ENCODE measurements at regions of chr6 and their contacts with region 1.

Region 1: DNA sequence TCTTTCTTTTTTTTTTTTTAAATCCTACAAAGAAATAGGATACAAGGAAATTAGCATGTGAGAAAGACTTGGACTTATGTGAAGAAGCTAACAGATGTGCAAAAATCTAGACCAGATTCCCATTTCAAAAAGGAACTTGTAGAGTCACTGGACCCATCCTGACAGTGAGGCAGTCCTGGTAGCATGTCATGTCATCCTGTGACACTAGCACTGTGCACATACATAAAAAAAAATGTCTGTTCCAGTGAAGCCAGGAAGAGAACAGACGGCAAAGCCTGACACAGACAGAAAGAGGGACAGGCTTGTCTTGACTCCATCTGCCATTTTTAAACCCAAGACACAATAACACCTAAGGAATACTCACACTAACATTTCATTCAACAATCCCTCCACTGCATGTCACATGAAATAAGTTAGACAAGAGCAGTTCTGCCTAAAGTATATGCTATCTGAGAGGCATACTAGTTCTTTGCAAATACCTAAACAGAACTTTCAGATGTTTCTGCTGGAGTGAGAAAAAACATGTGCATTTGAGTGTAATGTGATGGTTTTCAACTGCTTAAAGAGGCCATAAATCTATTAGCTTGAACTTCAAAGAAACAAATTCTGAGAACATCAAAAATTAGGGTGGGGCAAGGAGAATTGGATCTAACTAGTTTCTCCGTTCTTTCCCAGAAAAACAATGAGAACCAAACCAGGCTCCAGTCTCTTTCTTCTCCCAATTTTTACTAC is 159.6 kb downstream of the BACH2 start:
- DNase-seq: no peak
- ATAC-seq: peak; percentile 52
- H3K4me3 Mint-ChIP-seq: no peak overlapping the region
- H3K27ac Mint-ChIP-seq: peak overlapping the region; percentile 64
- H3K4me1 Mint-ChIP-seq: peaks cover 66% of the 10 kb centered on the region
- H3K27me3 Mint-ChIP-seq: no peaks in the 10 kb centered on the region
- CTCF ChIP-seq: no peak

Region 2: DNA sequence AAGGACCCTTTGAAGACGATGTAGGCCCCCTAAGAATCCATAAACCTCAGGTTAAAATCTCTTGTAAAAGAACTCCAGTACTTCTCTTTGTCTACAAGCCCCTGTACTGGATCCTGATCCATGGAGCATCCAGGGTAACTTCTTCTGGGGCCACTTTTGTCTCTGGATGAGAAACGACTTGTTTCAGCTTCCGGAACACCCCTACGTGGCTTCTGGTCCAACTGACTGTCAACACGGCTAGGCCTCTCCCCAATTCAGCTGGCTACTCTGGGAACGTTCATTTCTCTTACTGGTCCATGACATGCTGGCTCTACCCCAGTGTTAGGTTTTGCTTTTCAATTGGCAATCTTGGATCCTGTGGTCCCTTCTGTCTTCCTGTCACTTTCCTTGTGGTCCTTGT is 38.4 kb before region 1 on chr6:
- CTCF ChIA-PET with region 1: no interaction called
- POLR2A ChIA-PET with region 1: no interaction called
- intact Hi-C with region 1: no loop called
- DNase-seq: no peak
- ATAC-seq: no peak
- H3K4me3 Mint-ChIP-seq: no peak overlapping the region
- H3K27ac Mint-ChIP-seq: peak overlapping the region; percentile 85
- H3K4me1 Mint-ChIP-seq: peaks cover 90% of the 10 kb centered on the region
- H3K27me3 Mint-ChIP-seq: no peaks in the 10 kb centered on the region
- CTCF ChIP-seq: no peak

Region 3: DNA sequence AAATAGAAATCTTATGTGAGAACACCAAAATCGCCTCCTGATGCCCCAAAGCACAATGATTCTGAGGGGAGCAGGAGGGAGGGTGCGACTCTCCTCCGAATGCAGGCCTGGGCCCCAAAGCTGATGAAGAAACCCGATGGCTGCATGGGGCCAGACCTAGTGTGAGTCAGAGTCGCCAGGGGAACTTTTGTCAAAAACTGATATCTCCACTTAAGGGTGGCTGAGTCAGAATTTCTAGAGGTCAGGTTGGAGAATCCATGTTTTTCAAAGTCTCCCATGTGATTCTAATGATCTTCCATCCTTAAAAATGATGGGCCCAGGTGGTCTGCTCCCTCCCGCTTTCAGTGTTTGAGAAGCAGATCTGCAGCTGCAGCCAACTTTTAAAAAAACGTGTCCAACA is 13.2 kb before region 1 on chr6:
- CTCF ChIA-PET with region 1: interaction called, 19 read pairs
- POLR2A ChIA-PET with region 1: interaction called, 4 read pairs
- intact Hi-C with region 1: no loop called
- DNase-seq: peak; percentile 81
- ATAC-seq: peak; percentile 74
- H3K4me3 Mint-ChIP-seq: no peak overlapping the region
- H3K27ac Mint-ChIP-seq: peak overlapping the region; percentile 84
- H3K4me1 Mint-ChIP-seq: peaks cover 77% of the 10 kb centered on the region
- H3K27me3 Mint-ChIP-seq: no peaks in the 10 kb centered on the region
- CTCF ChIP-seq: no peak

Region 4: DNA sequence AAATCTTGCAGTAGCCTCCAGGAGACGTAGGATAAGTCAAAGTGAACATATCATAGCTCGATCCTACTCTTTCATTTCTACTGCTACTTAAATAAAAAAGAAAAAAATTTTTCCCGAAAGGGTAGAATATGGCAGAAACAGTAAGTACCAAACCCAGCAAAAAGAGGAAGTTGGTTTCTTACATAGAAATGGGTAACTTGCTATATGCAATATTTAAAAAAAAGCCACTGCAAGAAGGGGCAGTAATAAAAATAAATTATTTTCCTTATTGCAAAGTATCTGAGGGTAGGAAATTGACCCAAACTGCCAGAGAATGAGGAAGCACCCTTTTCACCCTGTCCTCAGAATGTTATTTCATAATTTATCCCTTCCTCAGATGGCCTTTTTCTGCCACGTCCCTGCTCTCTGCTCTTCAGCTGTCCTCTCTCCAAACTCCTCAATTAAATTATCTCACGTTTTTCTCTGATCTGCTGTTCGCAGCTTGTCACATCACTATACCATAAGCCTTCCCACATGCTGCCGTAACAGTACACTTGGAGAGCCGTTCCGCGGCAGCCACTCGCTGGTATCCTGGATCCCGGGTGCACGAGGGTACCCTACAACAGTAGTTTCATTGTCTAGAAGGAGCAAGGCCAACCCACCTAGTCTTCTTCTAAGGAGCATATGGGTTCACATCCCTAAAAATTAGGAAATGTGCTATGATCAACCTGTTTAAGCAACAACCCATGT is 10.1 kb after region 1 on chr6:
- CTCF ChIA-PET with region 1: no interaction called
- POLR2A ChIA-PET with region 1: no interaction called
- intact Hi-C with region 1: no loop called
- DNase-seq: no peak
- ATAC-seq: no peak
- H3K4me3 Mint-ChIP-seq: no peak overlapping the region
- H3K27ac Mint-ChIP-seq: peak overlapping the region; percentile 77
- H3K4me1 Mint-ChIP-seq: peaks cover 87% of the 10 kb centered on the region
- H3K27me3 Mint-ChIP-seq: no peaks in the 10 kb centered on the region
- CTCF ChIP-seq: no peak

Region 5: GRCh38 chr6:90162648-90163387 is 25.8 kb after region 1 on chr6:
- CTCF ChIA-PET with region 1: no interaction called
- POLR2A ChIA-PET with region 1: no interaction called
- intact Hi-C with region 1: no loop called
- DNase-seq: no peak
- ATAC-seq: peak; percentile 48
- H3K4me3 Mint-ChIP-seq: peak overlapping the region; percentile 3
- H3K27ac Mint-ChIP-seq: peak overlapping the region; percentile 75
- H3K4me1 Mint-ChIP-seq: peaks cover 56% of the 10 kb centered on the region
- H3K27me3 Mint-ChIP-seq: no peaks in the 10 kb centered on the region
- CTCF ChIP-seq: no peak

Region 6: DNA sequence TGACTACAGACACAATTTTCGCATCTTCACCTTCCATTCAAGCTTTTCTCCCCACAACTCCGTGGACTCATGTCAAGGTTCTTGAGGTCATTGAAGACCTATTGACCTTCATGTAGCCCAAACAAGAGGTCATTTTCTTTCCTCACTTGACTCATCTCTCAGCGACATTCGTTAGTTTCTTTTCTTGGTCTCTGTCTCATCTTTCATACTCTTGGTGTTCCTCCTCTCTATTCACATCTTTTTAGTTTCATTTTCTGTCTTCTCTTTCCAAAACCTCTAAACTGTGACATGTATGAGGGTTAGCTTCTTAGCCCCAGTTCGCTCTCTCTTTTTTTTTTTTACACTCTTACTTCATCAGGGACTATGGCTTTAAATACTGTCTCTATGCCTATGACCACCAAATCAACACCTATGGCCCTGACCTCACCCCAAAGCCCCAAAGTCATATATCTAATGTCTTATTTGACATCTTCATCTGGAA is 288.2 kb after region 1 on chr6:
- CTCF ChIA-PET with region 1: no interaction called
- POLR2A ChIA-PET with region 1: no interaction called
- intact Hi-C with region 1: no loop called
- DNase-seq: peak; percentile 64
- ATAC-seq: peak; percentile 96
- H3K4me3 Mint-ChIP-seq: peak overlapping the region; percentile 52
- H3K27ac Mint-ChIP-seq: peak overlapping the region; percentile 91
- H3K4me1 Mint-ChIP-seq: peaks cover 25% of the 10 kb centered on the region
- H3K27me3 Mint-ChIP-seq: no peaks in the 10 kb centered on the region
- CTCF ChIP-seq: no peak

Measured in activated CD8-positive, alpha-beta T cell treated with anti-CD3 and anti-CD28 coated beads for 36 hours (primary cell).